Ovary (tissue), 10 donors: ENCODE measurements at regions of chr16 and their contacts with region 1.

Region 1: DNA sequence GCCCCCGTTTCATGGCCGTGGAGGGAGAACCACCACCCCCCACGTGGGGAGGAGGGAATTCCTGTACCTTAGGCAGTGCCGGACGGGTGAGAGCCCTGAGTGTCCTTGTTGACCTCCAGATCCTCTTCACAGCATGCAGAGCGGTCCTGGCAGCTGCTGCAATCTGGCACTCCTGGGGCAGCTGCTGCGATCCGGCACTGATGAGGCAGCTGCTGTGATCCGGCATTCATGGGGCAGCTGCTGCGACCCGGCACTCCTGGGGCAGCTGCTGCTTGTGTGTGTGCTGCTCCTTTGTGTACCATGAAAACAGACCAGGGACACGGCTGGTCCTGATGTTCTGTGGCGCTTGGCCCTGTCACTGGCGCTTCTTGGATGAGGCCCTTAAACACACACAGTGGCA is 12.8 kb downstream of the ZNF778 start:
- DNase-seq: peak in 1 of 5 donors; percentile 19
- H3K4me3 ChIP-seq: no peak overlapping the region
- H3K27ac ChIP-seq: no peak overlapping the region
- H3K4me1 ChIP-seq: no peaks in the 10 kb centered on the region
- H3K27me3 ChIP-seq: no peaks in the 10 kb centered on the region
- CTCF ChIP-seq: no peak
- EP300 ChIP-seq: no peak
- POLR2A ChIP-seq: no peak

Region 2: GRCh38 chr16:89330177-89330856 is 100.1 kb after region 1 on chr16:
- intact Hi-C with region 1: no loop called
- DNase-seq: peak in 2 of 5 donors; percentile 43 to 48
- H3K4me3 ChIP-seq: no peak overlapping the region
- H3K27ac ChIP-seq: no peak overlapping the region
- H3K4me1 ChIP-seq: peaks cover 32% of the 10 kb centered on the region
- H3K27me3 ChIP-seq: no peaks in the 10 kb centered on the region
- CTCF ChIP-seq: no peak
- EP300 ChIP-seq: no peak
- POLR2A ChIP-seq: no peak

Region 3: GRCh38 chr16:89633064-89633631 is 402.9 kb after region 1 on chr16:
- intact Hi-C with region 1: loop called in 1 of 4 experiments (anchors 10 kb)
- DNase-seq: no peak
- H3K4me3 ChIP-seq: no peak overlapping the region
- H3K27ac ChIP-seq: no peak overlapping the region
- H3K4me1 ChIP-seq: no peaks in the 10 kb centered on the region
- H3K27me3 ChIP-seq: no peaks in the 10 kb centered on the region
- CTCF ChIP-seq: no peak
- EP300 ChIP-seq: no peak
- POLR2A ChIP-seq: no peak

Region 4: DNA sequence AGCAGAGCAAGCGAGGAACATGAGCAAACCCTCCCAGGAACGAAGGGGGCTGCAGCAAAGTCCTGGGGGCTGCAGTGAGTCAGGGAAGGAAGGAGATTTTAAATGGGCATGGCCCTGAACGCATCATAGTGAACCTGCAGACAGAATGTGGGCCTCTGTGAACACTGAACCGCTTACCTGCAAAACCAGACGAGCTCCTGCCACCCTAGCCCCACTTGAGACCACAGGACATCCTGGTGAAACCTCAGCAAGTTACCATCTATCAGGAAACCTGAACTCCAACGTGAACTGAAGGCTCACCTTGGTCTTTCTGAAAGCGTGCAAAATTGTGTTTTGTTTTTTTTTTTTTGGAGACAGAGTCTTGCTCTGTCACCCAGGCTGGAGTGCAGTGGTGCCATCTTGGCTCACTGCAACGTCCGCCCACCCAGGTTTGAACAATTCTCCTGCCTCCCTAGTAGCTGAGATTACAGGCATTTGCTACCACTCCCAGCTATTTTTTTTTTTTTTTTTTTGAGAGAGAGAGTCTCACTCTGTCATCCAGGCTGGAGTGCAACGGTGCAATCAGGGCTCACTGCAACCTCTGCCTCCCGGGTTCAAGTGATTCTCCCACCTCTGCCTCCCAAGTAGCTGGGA is 555.4 kb after region 1 on chr16:
- intact Hi-C with region 1: loop called in 1 of 4 experiments (anchors 5 kb)
- DNase-seq: no peak
- H3K4me3 ChIP-seq: no peak overlapping the region
- H3K27ac ChIP-seq: no peak overlapping the region
- H3K4me1 ChIP-seq: no peaks in the 10 kb centered on the region
- H3K27me3 ChIP-seq: no peaks in the 10 kb centered on the region
- CTCF ChIP-seq: no peak
- EP300 ChIP-seq: no peak
- POLR2A ChIP-seq: no peak